ENCODE measurements at regions of chrX and their contacts with region 1.

Region 1: DNA sequence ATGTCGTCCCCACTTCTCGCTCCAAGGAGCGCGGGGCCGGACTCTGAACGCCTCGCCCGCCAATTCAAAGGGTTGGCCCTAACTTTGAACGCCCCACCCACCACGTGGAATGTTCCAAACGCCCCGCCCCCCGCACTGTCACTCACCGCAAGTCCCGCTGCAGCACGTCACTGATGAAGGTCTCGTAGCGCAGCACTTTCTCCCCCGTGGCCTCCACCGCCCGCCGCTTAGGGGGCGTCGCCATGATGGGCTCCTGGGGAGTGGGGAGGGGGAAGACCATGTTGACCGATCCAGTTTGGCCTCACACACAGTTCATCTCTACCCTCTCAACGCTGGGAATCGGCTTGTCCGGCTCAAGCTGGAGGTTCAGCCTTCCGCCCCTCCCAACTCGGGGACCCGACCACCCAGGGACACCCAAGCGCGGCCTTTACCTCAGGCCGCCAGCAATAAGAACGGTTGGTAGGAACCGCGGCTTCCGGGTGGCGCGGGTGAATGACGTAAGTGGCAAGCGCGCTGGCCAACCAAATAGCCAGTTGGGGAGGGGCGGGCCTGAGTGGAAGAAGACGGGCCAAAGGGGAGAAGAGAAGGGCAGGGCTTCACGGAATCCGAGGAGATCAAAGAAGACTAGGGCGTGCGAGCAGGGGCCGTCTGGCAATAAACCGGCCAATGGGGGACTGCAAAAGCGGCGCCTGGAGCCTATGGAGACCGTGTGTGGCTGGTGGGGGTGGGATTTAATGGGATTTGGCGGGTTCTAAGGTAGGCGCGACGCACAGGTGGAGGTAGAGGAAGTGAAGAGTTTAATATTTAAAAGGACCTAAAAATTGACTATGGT is at the start of gene UXT:
- DNase-seq: peak; percentile 94
- ATAC-seq: peak; percentile 82
- H3K4me3 ChIP-seq: peak within 1 kb of the TSS; percentile 53 to 80 (median 71)
- H3K4me3 Mint-ChIP-seq: peak within 1 kb of the TSS; percentile 95
- H3K27ac ChIP-seq: peak within 1 kb of the TSS; percentile 98
- H3K27ac Mint-ChIP-seq: peak within 1 kb of the TSS; percentile 100
- H3K4me1 ChIP-seq: peaks cover 10 to 16% of the 10 kb centered on the region in 2 donors
- H3K4me1 Mint-ChIP-seq: peaks cover 16% of the 10 kb centered on the region
- H3K27me3 ChIP-seq: no peaks in the 10 kb centered on the region
- H3K27me3 Mint-ChIP-seq: no peaks in the 10 kb centered on the region
- CTCF ChIP-seq: no peak
- total RNA-seq, gene UXT: 177 and 183 TPM in 2 replicates

Region 2: DNA sequence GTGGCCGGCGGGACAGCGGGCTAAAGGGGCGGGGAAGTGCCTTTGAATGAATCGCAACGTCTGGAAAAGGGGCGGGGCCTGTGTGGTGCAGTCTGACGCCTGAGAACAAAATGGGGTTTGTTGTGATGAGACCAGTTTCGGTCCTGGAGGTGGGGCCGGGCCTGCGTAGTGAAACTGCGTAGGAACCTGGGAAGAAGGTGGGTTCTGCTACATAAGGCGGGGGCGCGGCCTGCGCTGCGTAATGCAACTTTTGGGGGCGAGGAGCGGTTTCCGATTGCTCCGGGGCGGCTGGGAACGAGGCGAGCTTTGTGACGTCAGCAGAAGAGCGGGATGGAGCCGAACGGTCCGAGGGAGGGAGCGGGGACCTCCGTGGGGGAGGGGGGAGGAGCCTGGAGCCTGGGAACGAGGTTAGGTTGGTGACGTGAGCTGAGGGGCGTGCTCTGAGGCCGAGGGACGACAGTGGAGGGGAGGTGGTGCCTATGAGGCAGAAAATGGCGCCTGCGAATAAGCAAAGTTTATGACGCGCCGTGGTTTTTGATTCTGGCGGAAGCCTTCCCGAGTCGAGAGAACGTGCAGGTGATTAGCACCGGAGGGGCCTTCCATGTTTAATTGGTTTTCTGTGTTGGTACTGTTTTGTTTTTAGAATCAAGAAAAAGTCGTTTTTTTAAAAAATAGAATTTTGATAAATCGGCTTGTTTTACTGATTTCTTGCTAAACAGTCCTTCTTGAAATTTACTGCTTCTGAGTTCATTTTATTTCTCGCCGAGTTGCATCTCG is 425.4 kb before region 1 on chrX:
- CTCF ChIA-PET with region 1: no interaction called
- POLR2A ChIA-PET with region 1: no interaction called
- intact Hi-C with region 1: loop called (anchors 5 kb)
- DNase-seq: peak; percentile 96
- ATAC-seq: peak; percentile 88
- H3K4me3 ChIP-seq: peak overlapping the region; percentile 67 to 82 (median 75)
- H3K4me3 Mint-ChIP-seq: peak overlapping the region; percentile 94
- H3K27ac ChIP-seq: peak overlapping the region; percentile 96 to 99
- H3K27ac Mint-ChIP-seq: peak overlapping the region; percentile 99
- H3K4me1 ChIP-seq: peaks cover 0 to 8% of the 10 kb centered on the region in 2 donors
- H3K4me1 Mint-ChIP-seq: peaks cover 21% of the 10 kb centered on the region
- H3K27me3 ChIP-seq: no peaks in the 10 kb centered on the region
- H3K27me3 Mint-ChIP-seq: no peaks in the 10 kb centered on the region
- CTCF ChIP-seq: no peak

Region 3: DNA sequence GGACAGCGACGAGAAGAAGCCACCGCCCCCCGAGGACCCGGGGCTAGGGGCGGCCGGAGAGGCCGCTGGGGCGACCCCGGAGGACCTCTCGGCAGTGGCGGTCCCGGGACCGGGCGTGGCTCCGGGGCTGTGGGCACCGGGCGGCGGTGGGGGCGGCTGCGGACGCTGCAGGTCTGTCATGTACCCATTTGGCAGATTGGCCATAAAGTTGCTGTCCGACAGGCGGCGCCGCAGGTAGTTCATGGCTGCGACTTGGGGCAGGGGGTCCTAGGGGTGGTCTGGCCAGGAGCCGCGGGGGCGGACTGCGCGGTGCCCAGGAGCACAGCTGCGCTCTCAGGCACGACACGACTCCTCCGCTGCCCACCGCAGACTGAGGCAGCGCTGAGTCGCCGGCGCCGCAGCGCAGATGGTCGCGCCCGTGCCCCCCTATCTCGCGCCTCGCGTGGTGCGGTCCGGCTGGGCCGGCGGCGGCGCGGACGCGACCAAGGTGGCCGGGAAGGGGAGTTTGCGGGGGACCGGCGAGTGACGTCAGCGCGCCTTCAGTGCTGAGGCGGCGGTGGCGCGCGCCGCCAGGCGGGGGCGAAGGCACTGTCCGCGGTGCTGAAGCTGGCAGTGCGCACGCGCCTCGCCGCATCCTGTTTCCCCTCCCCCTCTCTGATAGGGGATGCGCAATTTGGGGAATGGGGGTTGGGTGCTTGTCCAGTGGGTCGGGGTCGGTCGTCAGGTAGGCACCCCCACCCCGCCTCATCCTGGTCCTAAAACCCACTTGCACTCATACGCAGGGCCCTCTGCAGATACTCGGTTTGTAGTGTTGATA is 39.2 kb before region 1 on chrX and contains the start of gene SYN1:
- CTCF ChIA-PET with region 1: no interaction called
- POLR2A ChIA-PET with region 1: no interaction called
- intact Hi-C with region 1: loop called (anchors 5 kb)
- DNase-seq: peak; percentile 86
- ATAC-seq: peak; percentile 95
- H3K4me3 ChIP-seq: peak within 1 kb of the TSS in 3 of 5 experiments; percentile 35 to 47 (median 44)
- H3K4me3 Mint-ChIP-seq: peak within 1 kb of the TSS; percentile 74
- H3K27ac ChIP-seq: no peak within 1 kb of the TSS
- H3K27ac Mint-ChIP-seq: peak within 1 kb of the TSS; percentile 6
- H3K4me1 ChIP-seq: peaks cover 4 to 15% of the 10 kb centered on the region in 2 donors
- H3K4me1 Mint-ChIP-seq: peaks cover 14% of the 10 kb centered on the region
- H3K27me3 ChIP-seq: peaks cover 0 to 29% (median 2%) of the 10 kb centered on the region in 4 experiments
- H3K27me3 Mint-ChIP-seq: peaks cover 42% of the 10 kb centered on the region
- CTCF ChIP-seq: peak; percentile 6
- total RNA-seq, gene SYN1: not detected in 2 replicates

Region 4: GRCh38 chrX:47836164-47837072 is 177.5 kb after region 1 on chrX and contains the start of gene ZNF81:
- CTCF ChIA-PET with region 1: no interaction called
- POLR2A ChIA-PET with region 1: no interaction called
- intact Hi-C with region 1: loop called (anchors 5 kb)
- DNase-seq: peak; percentile 93
- ATAC-seq: peak; percentile 97
- H3K4me3 ChIP-seq: peak within 1 kb of the TSS; percentile 66 to 76 (median 70)
- H3K4me3 Mint-ChIP-seq: peak within 1 kb of the TSS; percentile 99
- H3K27ac ChIP-seq: peak within 1 kb of the TSS; percentile 64 to 73
- H3K27ac Mint-ChIP-seq: peak within 1 kb of the TSS; percentile 98
- H3K4me1 ChIP-seq: peaks cover 9% of the 10 kb centered on the region in 2 donors
- H3K4me1 Mint-ChIP-seq: peaks cover 24% of the 10 kb centered on the region
- H3K27me3 ChIP-seq: no peaks in the 10 kb centered on the region
- H3K27me3 Mint-ChIP-seq: no peaks in the 10 kb centered on the region
- CTCF ChIP-seq: no peak
- total RNA-seq, gene ZNF81: 15.3 and 17.7 TPM in 2 replicates

Measured in B cell (primary cell).